ENCODE measurements at regions of chr3 and their contacts with region 1.

Region 1: DNA sequence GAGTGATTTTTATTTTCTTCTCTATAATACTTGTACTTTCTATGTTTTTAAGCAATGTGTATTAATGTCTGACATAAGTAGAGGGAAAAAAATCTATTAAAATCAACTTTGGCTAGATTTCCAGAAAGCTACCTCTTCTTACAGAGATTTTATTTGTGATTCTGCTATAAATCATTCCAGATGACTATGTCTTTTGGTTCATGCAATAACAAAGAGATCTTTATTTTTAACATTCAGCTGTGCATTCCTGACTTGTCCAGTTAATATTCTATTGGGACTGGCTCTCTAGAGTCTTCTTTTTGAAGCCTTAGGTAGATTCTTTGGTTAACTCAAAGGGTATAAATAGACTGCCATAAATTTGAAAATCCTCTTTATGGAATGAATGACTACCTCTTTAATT is 74.3 kb upstream of the ARPP21 start:
- DNase-seq: no peak
- H3K4me3 ChIP-seq: no peak overlapping the region
- H3K27ac ChIP-seq: no peak overlapping the region
- H3K27me3 ChIP-seq: no peaks in the 10 kb centered on the region
- CTCF ChIP-seq: no peak

Region 2: GRCh38 chr3:35537265-35537664 is 27.8 kb before region 1 on chr3:
- CTCF ChIA-PET with region 1: no interaction called
- POLR2A ChIA-PET with region 1: no interaction called
- DNase-seq: no peak
- H3K4me3 ChIP-seq: no peak overlapping the region
- H3K27ac ChIP-seq: no peak overlapping the region
- H3K27me3 ChIP-seq: no peaks in the 10 kb centered on the region
- CTCF ChIP-seq: no peak

Region 3: GRCh38 chr3:36132214-36132613 is 567.2 kb after region 1 on chr3:
- CTCF ChIA-PET with region 1: interaction called, 12 read pairs
- POLR2A ChIA-PET with region 1: no interaction called
- DNase-seq: no peak
- H3K4me3 ChIP-seq: no peak overlapping the region
- H3K27ac ChIP-seq: no peak overlapping the region
- H3K27me3 ChIP-seq: no peaks in the 10 kb centered on the region
- CTCF ChIP-seq: no peak

Measured in AG04450 (cell line).